GM12878 (cell line): ENCODE measurements at regions of chr3 and their contacts with region 1.

Region 1: GRCh38 chr3:101809178-101810021 is 30.4 kb downstream of the NXPE3 start:
- DNase-seq: no peak
- ATAC-seq: peak; percentile 64
- H3K4me3 ChIP-seq: no peak overlapping the region
- H3K27ac ChIP-seq: no peak overlapping the region
- H3K4me1 ChIP-seq: peaks cover 15% of the 10 kb centered on the region
- H3K27me3 ChIP-seq: no peaks in the 10 kb centered on the region
- CTCF ChIP-seq: peak; percentile 56 to 84 (median 65); a peak in 5 of 6 replicates
- EP300 ChIP-seq: no peak
- POLR2A ChIP-seq: no peak
- RAD21 ChIP-seq: peak; percentile 82

Region 2: DNA sequence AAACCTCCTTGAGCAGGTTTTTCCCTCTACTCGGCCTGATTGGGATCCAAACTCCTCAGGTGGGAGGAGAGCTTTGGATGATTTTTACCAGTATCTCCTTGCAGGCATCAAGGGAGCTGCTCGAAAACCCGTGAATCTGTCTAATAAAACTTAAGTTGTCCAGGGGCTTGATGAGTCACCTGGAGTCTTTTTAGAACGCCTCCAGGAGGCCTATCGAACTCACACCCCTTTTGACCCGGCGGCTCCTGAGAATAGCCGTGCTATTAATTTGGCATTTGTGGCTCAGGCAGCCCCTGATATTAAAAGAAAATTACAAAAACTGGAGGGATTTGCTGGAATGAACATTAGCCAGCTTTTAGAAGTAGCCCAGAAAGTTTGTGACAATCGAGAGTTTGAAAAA is 174.1 kb before region 1 on chr3:
- CTCF ChIA-PET with region 1: no interaction called
- POLR2A ChIA-PET with region 1: no interaction called
- RAD21 ChIA-PET with region 1: no interaction called
- SMC1A ChIA-PET with region 1: no interaction called
- in situ Hi-C with region 1: no loop called
- intact Hi-C with region 1: no loop called
- DNase-seq: no peak
- ATAC-seq: no peak
- H3K4me3 ChIP-seq: no peak overlapping the region
- H3K27ac ChIP-seq: no peak overlapping the region
- H3K4me1 ChIP-seq: no peaks in the 10 kb centered on the region; the same call in 1 of the 2 replicates
- H3K27me3 ChIP-seq: no peaks in the 10 kb centered on the region; a peak in 1 of 4 replicates
- CTCF ChIP-seq: no peak
- EP300 ChIP-seq: no peak
- POLR2A ChIP-seq: no peak
- RAD21 ChIP-seq: no peak

Region 3: DNA sequence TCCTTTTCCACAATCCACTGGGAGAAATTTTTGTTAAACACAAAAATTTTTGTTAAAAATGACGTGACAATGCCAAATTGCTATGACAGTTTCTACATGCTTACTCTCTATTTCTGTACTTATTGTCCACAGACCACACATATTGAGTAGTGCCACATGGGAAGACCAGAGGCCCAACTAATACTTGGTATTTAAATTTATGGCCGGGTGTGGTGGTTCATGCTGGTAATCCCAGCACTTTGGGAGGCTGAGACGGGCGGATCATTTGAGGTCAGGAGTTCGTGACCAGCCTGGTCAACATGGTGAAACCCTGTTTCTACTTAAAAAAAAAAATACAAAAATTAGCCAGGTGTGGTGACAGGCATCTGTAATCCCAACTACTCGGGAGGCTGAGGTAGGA is 152.7 kb before region 1 on chr3:
- CTCF ChIA-PET with region 1: no interaction called
- POLR2A ChIA-PET with region 1: no interaction called
- RAD21 ChIA-PET with region 1: no interaction called
- SMC1A ChIA-PET with region 1: no interaction called
- in situ Hi-C with region 1: no loop called
- intact Hi-C with region 1: no loop called
- DNase-seq: no peak
- ATAC-seq: no peak
- H3K4me3 ChIP-seq: no peak overlapping the region
- H3K27ac ChIP-seq: no peak overlapping the region
- H3K4me1 ChIP-seq: no peaks in the 10 kb centered on the region
- H3K27me3 ChIP-seq: no peaks in the 10 kb centered on the region
- CTCF ChIP-seq: no peak
- EP300 ChIP-seq: no peak
- POLR2A ChIP-seq: no peak
- RAD21 ChIP-seq: no peak

Region 4: GRCh38 chr3:101819758-101820157 is 10.4 kb after region 1 on chr3:
- CTCF ChIA-PET with region 1: interaction called, 21 read pairs
- POLR2A ChIA-PET with region 1: interaction called, 4 read pairs
- RAD21 ChIA-PET with region 1: interaction called, 9 read pairs
- SMC1A ChIA-PET with region 1: interaction called, 21 read pairs
- in situ Hi-C with region 1: no loop called
- intact Hi-C with region 1: no loop called
- DNase-seq: no peak
- ATAC-seq: peak; percentile 93
- H3K4me3 ChIP-seq: no peak overlapping the region
- H3K27ac ChIP-seq: no peak overlapping the region
- H3K4me1 ChIP-seq: peaks cover 24% of the 10 kb centered on the region
- H3K27me3 ChIP-seq: no peaks in the 10 kb centered on the region
- CTCF ChIP-seq: no peak
- EP300 ChIP-seq: peak in 1 of 2 experiments; percentile 47; a peak in 1 of 4 replicates
- POLR2A ChIP-seq: no peak
- RAD21 ChIP-seq: no peak

Region 5: GRCh38 chr3:101849051-101849720 is 39.8 kb after region 1 on chr3 and contains the start of gene NFKBIZ:
- CTCF ChIA-PET with region 1: interaction called, 17 read pairs
- POLR2A ChIA-PET with region 1: interaction called, 3 read pairs
- RAD21 ChIA-PET with region 1: interaction called, 12 read pairs
- SMC1A ChIA-PET with region 1: interaction called, 72 read pairs
- in situ Hi-C with region 1: no loop called
- intact Hi-C with region 1: loop called (anchors 2 kb)
- DNase-seq: no peak
- ATAC-seq: peak; percentile 78
- H3K4me3 ChIP-seq: peak within 1 kb of the TSS; percentile 75
- H3K27ac ChIP-seq: peak within 1 kb of the TSS; percentile 93
- H3K4me1 ChIP-seq: peaks cover 16% of the 10 kb centered on the region
- H3K27me3 ChIP-seq: no peaks in the 10 kb centered on the region
- CTCF ChIP-seq: no peak
- EP300 ChIP-seq: no peak
- POLR2A ChIP-seq: peak; percentile 95
- RAD21 ChIP-seq: no peak
- polyA plus RNA-seq, gene NFKBIZ: 6.3 to 8.9 TPM

Region 6: GRCh38 chr3:101902041-101902440 is 92.6 kb after region 1 on chr3:
- CTCF ChIA-PET with region 1: interaction called, 17 read pairs
- POLR2A ChIA-PET with region 1: no interaction called
- RAD21 ChIA-PET with region 1: interaction called, 3 read pairs
- SMC1A ChIA-PET with region 1: interaction called, 16 read pairs
- in situ Hi-C with region 1: no loop called
- intact Hi-C with region 1: no loop called
- DNase-seq: no peak
- ATAC-seq: peak; percentile 42
- H3K4me3 ChIP-seq: no peak overlapping the region
- H3K27ac ChIP-seq: no peak overlapping the region
- H3K4me1 ChIP-seq: peaks cover 26% of the 10 kb centered on the region
- H3K27me3 ChIP-seq: no peaks in the 10 kb centered on the region
- CTCF ChIP-seq: no peak
- EP300 ChIP-seq: no peak
- POLR2A ChIP-seq: no peak
- RAD21 ChIP-seq: no peak

Region 7: GRCh38 chr3:102529452-102529851 is 720.1 kb after region 1 on chr3:
- CTCF ChIA-PET with region 1: interaction called, 4 read pairs
- POLR2A ChIA-PET with region 1: no interaction called
- RAD21 ChIA-PET with region 1: no interaction called
- SMC1A ChIA-PET with region 1: no interaction called
- in situ Hi-C with region 1: loop called (anchors 5 kb)
- intact Hi-C with region 1: no loop called
- DNase-seq: no peak
- ATAC-seq: no peak
- H3K4me3 ChIP-seq: no peak overlapping the region
- H3K27ac ChIP-seq: no peak overlapping the region
- H3K4me1 ChIP-seq: no peaks in the 10 kb centered on the region
- H3K27me3 ChIP-seq: no peaks in the 10 kb centered on the region; a peak in 1 of 4 replicates
- CTCF ChIP-seq: peak in 2 of 3 experiments; percentile 13 to 22; a peak in 1 of 6 replicates
- EP300 ChIP-seq: no peak
- POLR2A ChIP-seq: no peak
- RAD21 ChIP-seq: 0 out of 2 replicates have a peak, but pooled peaks have one; percentile 27